ENCODE measurements at regions of chrX and their contacts with region 1.

Region 1: GRCh38 chrX:67328476-67328875 is 215.3 kb upstream of the AR start:
- DNase-seq: no peak
- H3K4me3 ChIP-seq: no peak overlapping the region
- H3K27ac ChIP-seq: no peak overlapping the region
- H3K4me1 ChIP-seq: no peaks in the 10 kb centered on the region
- H3K27me3 ChIP-seq: no peaks in the 10 kb centered on the region
- CTCF ChIP-seq: no peak
- EP300 ChIP-seq: no peak
- POLR2A ChIP-seq: no peak

Region 2: DNA sequence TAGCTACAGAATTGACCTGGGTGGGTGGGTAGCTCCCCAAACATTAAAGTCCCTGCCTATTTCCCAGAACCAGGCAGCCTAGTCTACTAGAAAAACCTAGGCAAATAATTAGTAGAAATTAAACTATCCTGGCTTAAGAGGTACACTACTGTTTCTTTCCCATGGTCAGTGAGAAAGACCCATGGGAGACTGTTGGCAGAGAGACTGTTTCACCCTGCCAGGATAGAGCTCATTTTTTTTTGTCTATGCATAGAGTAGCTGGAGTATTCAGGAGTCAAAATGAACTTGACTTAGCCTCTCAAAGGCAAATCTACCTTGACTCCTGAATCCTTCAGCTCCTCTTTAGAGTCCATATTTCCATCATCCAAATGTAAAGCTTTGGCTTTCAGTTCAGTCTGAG is 108.4 kb after region 1 on chrX:
- in situ Hi-C with region 1: loop called in 1 of 4 experiments (anchors 25 kb)
- intact Hi-C with region 1: no loop called
- DNase-seq: no peak
- H3K4me3 ChIP-seq: no peak overlapping the region
- H3K27ac ChIP-seq: no peak overlapping the region
- H3K4me1 ChIP-seq: no peaks in the 10 kb centered on the region
- H3K27me3 ChIP-seq: no peaks in the 10 kb centered on the region
- CTCF ChIP-seq: no peak
- EP300 ChIP-seq: no peak
- POLR2A ChIP-seq: no peak